Calu3 (cell line): ENCODE measurements at regions of chr12 and their contacts with region 1.

Region 1: GRCh38 chr12:49740930-49741881 is at the start of gene TMBIM6:
- DNase-seq: peak; percentile 95
- H3K4me3 Mint-ChIP-seq: peak within 1 kb of the TSS; percentile 96
- H3K27ac Mint-ChIP-seq: peak within 1 kb of the TSS; percentile 100
- H3K4me1 Mint-ChIP-seq: peaks cover 10% of the 10 kb centered on the region
- H3K27me3 Mint-ChIP-seq: no peaks in the 10 kb centered on the region
- CTCF ChIP-seq: peak; percentile 72
- total RNA-seq, gene TMBIM6: 600 and 613 TPM in 2 replicates

Region 2: DNA sequence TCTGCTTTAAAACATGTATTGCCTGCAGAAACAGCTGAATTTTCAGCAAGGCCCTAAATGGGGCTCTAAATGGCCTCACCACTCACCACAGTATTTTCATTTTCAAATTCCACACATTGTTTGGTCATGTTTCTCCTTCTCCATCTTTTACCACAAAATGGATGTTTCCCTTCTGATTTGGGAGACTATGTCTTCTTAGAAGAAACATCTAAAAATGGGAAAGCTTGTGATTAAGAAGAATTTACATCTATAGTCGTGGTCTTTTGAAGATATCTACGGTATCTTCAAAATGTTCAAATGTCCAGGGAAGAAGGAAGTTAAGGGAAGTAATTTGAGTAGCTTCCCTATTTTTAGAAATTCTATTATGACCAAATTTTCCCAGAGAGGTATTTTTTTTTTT is 497.0 kb before region 1 on chr12:
- CTCF ChIA-PET with region 1: no interaction called
- intact Hi-C with region 1: no loop called
- DNase-seq: no peak
- H3K4me3 Mint-ChIP-seq: no peak overlapping the region
- H3K27ac Mint-ChIP-seq: no peak overlapping the region
- H3K4me1 Mint-ChIP-seq: no peaks in the 10 kb centered on the region
- H3K27me3 Mint-ChIP-seq: no peaks in the 10 kb centered on the region
- CTCF ChIP-seq: no peak

Region 3: DNA sequence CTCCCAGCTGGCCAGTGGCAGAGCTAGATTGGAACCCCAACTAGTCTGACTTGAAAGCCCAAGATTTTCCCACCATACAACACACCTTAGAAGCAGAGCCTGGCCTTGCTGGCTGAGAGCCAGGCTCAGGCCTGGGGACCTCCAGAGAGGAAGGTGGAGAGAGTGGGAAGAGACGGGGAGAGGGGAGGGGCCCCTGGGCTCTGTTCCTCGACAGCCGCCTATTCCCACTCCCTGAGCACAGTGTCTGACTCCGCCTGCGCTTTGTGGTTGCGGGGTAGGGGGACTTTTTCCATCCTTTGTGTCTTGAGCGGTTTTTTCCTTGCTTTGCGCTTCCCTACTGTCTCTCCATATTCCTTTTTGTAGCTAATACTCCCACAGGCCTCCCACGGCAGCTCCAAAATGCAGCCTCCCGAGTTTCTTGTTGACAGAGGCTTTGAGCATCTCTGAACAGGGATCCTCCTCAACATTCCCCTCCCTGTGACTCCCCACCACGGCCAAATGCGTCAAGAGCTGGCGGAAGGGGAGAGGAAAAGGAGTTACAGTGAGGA is 206.4 kb before region 1 on chr12:
- CTCF ChIA-PET with region 1: no interaction called
- intact Hi-C with region 1: no loop called
- DNase-seq: no peak
- H3K4me3 Mint-ChIP-seq: no peak overlapping the region
- H3K27ac Mint-ChIP-seq: no peak overlapping the region
- H3K4me1 Mint-ChIP-seq: peaks cover 9% of the 10 kb centered on the region
- H3K27me3 Mint-ChIP-seq: peaks cover 16% of the 10 kb centered on the region
- CTCF ChIP-seq: no peak

Region 4: GRCh38 chr12:49716553-49716952 is 24.7 kb before region 1 on chr12:
- CTCF ChIA-PET with region 1: interaction called, 19 read pairs
- intact Hi-C with region 1: no loop called
- DNase-seq: no peak
- H3K4me3 Mint-ChIP-seq: no peak overlapping the region
- H3K27ac Mint-ChIP-seq: no peak overlapping the region
- H3K4me1 Mint-ChIP-seq: no peaks in the 10 kb centered on the region
- H3K27me3 Mint-ChIP-seq: peaks cover 47% of the 10 kb centered on the region
- CTCF ChIP-seq: no peak

Region 5: DNA sequence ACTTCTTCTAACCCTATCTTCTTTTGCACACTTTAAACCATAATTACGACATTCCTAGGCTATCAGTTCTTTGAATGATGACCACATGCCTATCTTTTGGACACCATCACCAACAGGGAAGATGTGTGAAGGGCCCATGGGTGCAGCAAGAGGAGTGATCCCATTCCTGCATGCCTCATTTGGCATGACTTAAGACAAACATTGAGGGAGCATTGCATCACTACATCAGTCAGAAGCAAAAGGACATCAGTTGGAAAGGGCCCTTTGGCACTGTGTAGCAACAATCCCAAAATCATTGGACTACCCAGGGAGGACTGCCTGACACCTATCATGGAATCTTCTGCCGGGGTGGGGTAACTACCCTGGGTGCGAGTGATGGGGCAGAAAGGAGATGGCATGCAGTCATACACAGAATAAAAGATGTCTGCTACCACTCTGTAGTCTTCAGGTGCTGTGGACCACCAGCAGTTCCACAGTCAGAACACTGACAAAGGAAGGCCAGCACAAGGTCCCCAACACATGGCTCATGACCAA is 10.6 kb before region 1 on chr12:
- CTCF ChIA-PET with region 1: interaction called, 15 read pairs
- intact Hi-C with region 1: no loop called
- DNase-seq: no peak
- H3K4me3 Mint-ChIP-seq: no peak overlapping the region
- H3K27ac Mint-ChIP-seq: no peak overlapping the region
- H3K4me1 Mint-ChIP-seq: peaks cover 20% of the 10 kb centered on the region
- H3K27me3 Mint-ChIP-seq: peaks cover 9% of the 10 kb centered on the region
- CTCF ChIP-seq: no peak

Region 6: DNA sequence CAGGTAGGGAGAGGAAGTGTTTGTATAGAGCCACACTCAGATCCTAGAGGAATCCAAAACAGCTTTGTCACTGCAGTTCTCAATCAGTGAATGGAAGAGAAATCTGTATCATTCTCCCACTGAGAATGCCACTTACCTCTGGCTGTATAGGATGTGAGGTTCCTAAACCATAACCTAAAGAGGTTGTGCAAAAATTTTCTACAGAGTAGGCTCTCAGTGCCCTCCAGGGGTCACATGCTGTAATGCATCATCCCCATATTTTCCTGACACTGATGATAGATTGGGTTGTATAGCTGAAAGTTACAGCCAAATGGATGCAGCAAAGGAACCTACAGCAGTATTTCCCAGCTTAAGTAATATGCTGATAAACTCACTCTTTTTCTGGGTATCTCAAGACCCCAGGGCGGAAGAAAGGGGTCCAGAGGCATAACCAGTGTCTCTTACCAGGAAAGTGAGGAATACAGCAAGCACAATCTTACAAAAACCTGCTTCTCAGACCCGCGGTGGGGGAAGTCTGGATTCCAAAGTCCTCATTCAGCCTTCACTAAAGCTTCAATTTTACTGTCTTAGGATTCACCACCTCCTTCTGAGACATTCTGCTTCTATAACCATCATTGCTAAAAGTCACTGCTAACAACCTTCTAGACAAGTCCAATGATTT is 97.9 kb after region 1 on chr12:
- CTCF ChIA-PET with region 1: interaction called, 13 read pairs
- intact Hi-C with region 1: no loop called
- DNase-seq: peak; percentile 16
- H3K4me3 Mint-ChIP-seq: no peak overlapping the region
- H3K27ac Mint-ChIP-seq: no peak overlapping the region
- H3K4me1 Mint-ChIP-seq: peaks cover 22% of the 10 kb centered on the region
- H3K27me3 Mint-ChIP-seq: no peaks in the 10 kb centered on the region
- CTCF ChIP-seq: peak; percentile 20

Region 7: GRCh38 chr12:50411051-50411660 is 670.0 kb after region 1 on chr12:
- CTCF ChIA-PET with region 1: no interaction called
- intact Hi-C with region 1: no loop called
- DNase-seq: no peak
- H3K4me3 Mint-ChIP-seq: no peak overlapping the region
- H3K27ac Mint-ChIP-seq: no peak overlapping the region
- H3K4me1 Mint-ChIP-seq: no peaks in the 10 kb centered on the region
- H3K27me3 Mint-ChIP-seq: no peaks in the 10 kb centered on the region
- CTCF ChIP-seq: no peak